Esophagus muscularis mucosa (tissue), 4 donors: ENCODE measurements at regions of chr17 and their contacts with region 1.

Region 1: DNA sequence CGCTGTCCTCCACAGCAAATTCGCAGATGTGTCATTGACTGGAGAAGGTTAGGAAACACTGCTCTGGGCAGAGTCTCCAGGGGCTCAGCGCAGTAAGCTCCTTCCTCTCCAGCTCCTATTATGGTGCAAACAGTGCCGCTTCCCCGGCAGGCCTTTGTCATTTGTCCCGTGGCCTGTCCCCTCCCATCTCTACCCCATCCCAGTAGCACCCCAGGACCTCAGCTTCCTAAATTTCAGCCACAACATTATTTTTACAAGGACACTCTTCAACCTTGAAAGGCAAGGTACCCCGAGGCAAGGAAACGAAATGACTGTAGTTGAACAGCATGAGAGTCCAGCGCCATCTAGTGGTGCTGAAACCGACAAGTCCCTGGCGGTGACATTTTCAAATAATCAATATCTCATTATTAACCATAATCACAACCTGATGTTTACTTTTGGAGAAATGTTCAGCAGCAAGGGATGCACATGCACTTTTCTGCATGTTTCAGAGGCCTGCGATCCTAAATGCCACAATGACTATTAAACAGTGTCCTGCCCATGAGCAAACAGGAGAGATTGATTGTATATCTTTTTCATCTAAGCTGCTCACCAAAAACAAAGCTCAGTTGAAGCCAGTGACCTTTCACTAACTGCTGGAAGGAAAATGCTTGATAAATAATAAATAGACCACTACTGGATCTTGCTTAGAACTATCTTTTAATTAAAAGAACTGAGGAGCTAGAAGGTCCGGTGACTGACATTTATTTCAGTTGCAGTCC is 16.5 kb downstream of the MRPS23 start:
- DNase-seq: no peak
- H3K4me3 ChIP-seq: peak overlapping the region; percentile 47 to 60 (median 52)
- H3K27ac ChIP-seq: peak overlapping the region; percentile 80 to 89 (median 83)
- H3K4me1 ChIP-seq: peaks cover 33 to 46% (median 37%) of the 10 kb centered on the region in 4 donors
- H3K27me3 ChIP-seq: no peaks in the 10 kb centered on the region
- CTCF ChIP-seq: peak; percentile 88 to 91 (median 89)
- EP300 ChIP-seq: no peak
- POLR2A ChIP-seq: no peak

Region 2: GRCh38 chr17:57130761-57131461 is 702.4 kb before region 1 on chr17:
- intact Hi-C with region 1: loop called (anchors 2 kb)
- DNase-seq: peak; percentile 94
- H3K4me3 ChIP-seq: peak overlapping the region; percentile 17 to 26 (median 24)
- H3K27ac ChIP-seq: no peak overlapping the region
- H3K4me1 ChIP-seq: peaks cover 0 to 7% (median 3%) of the 10 kb centered on the region in 4 donors
- H3K27me3 ChIP-seq: no peaks in the 10 kb centered on the region
- CTCF ChIP-seq: peak in 2 of 3 experiments; percentile 74 to 87
- EP300 ChIP-seq: no peak
- POLR2A ChIP-seq: no peak

Region 3: GRCh38 chr17:57243171-57243948 is 590.0 kb before region 1 on chr17:
- intact Hi-C with region 1: loop called (anchors 5 kb)
- DNase-seq: no peak
- H3K4me3 ChIP-seq: no peak overlapping the region
- H3K27ac ChIP-seq: no peak overlapping the region
- H3K4me1 ChIP-seq: peaks cover 7 to 16% (median 9%) of the 10 kb centered on the region in 4 donors
- H3K27me3 ChIP-seq: no peaks in the 10 kb centered on the region
- CTCF ChIP-seq: peak; percentile 98 to 100 (median 99)
- EP300 ChIP-seq: no peak
- POLR2A ChIP-seq: no peak

Region 4: GRCh38 chr17:57597531-57598453 is 235.6 kb before region 1 on chr17:
- intact Hi-C with region 1: loop called (anchors 5 kb)
- DNase-seq: no peak
- H3K4me3 ChIP-seq: no peak overlapping the region
- H3K27ac ChIP-seq: no peak overlapping the region
- H3K4me1 ChIP-seq: peaks cover 4 to 9% (median 9%) of the 10 kb centered on the region in 4 donors
- H3K27me3 ChIP-seq: no peaks in the 10 kb centered on the region
- CTCF ChIP-seq: peak; percentile 78 to 87 (median 80)
- EP300 ChIP-seq: no peak
- POLR2A ChIP-seq: no peak